Activated CD8-positive, alpha-beta T cell treated with anti-CD3 and anti-CD28 coated beads, Interleukin-2, amount 10 ng/mL, durations not matched to agents 7 days and 5 days (primary cell): ENCODE measurements at regions of chr1 and their contacts with region 1.

Region 1: DNA sequence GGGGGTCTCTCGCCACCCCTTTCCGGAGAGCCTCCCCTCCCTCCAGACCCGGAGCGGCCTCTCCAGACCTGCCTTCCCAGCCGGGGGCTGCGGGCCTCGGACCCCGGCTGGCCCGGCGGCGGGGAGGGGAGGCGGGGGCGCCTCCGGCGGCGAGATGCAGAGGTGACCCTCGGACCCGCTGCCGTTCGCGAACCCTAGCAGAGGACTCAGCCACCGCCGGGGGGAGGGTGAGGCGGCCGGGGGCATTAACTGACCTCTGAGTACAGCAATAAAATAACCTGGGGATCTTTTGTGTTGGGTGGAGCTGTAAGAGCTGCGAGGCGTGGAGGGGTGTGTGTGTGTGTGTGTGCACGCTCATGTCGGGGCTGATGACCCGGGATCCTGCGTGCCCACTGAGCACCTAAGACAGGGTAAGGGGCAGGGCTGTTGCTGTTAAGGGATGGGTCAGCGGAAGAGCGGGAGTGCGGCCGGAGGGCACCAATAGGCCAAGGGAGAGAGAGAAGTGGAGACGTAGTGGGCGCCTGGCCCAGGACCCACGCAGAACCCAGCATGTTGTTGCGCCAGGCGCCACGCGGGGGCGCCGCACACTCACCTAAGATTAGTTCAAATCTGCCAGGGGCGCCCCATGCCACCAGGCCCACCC is 6.3 kb downstream of the HAPLN2 start:
- DNase-seq: peak; percentile 70
- ATAC-seq: peak; percentile 57
- H3K4me3 Mint-ChIP-seq: peak overlapping the region; percentile 40
- H3K27ac Mint-ChIP-seq: no peak overlapping the region
- H3K4me1 Mint-ChIP-seq: peaks cover 12% of the 10 kb centered on the region
- H3K27me3 Mint-ChIP-seq: peaks cover 47% of the 10 kb centered on the region

Region 2: DNA sequence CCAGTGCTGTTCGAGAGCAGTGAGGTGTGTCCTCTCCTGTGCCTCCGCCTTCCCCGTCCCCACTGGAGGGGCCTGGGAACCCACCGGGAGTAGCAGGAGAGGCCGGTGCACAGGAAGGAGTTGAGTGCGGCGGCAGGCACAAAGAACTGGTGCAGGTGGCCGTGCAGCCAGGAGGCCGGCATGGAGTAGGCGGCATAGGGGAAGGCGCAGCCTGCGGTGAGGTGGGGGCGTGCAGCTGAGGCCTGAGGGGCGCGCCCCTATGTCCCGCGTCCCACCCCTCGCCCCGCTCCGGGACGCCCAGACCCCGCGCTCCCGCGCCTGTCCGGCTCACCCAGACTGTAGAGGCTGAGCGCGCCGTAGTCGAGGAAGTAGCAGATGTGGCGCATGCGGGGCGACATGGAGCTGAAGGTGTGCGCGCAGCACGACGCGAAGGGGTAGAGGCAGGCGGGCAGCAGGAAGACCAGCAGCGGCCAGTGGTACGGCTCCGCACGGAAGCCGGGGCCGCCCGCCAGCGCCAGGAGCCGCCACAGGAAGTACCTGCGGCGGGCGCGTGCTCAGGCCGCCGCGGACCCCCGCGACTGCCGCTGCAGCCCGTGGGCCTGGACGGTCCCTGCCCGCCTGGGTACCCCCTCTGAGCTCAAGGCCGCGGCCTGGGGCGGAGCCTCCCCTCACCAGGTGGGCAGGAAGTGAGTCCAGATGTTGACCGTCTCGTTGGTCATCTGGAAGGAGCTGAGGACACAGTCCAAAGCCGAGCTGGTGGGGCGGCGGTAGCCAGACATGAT is 379.9 kb before region 1 on chr1:
- CTCF ChIA-PET with region 1: no interaction called
- POLR2A ChIA-PET with region 1: no interaction called
- DNase-seq: peak; percentile 65
- ATAC-seq: peak; percentile 82
- H3K4me3 Mint-ChIP-seq: peak overlapping the region; percentile 75
- H3K27ac Mint-ChIP-seq: peak overlapping the region; percentile 93
- H3K4me1 Mint-ChIP-seq: peaks cover 37% of the 10 kb centered on the region
- H3K27me3 Mint-ChIP-seq: no peaks in the 10 kb centered on the region

Region 3: DNA sequence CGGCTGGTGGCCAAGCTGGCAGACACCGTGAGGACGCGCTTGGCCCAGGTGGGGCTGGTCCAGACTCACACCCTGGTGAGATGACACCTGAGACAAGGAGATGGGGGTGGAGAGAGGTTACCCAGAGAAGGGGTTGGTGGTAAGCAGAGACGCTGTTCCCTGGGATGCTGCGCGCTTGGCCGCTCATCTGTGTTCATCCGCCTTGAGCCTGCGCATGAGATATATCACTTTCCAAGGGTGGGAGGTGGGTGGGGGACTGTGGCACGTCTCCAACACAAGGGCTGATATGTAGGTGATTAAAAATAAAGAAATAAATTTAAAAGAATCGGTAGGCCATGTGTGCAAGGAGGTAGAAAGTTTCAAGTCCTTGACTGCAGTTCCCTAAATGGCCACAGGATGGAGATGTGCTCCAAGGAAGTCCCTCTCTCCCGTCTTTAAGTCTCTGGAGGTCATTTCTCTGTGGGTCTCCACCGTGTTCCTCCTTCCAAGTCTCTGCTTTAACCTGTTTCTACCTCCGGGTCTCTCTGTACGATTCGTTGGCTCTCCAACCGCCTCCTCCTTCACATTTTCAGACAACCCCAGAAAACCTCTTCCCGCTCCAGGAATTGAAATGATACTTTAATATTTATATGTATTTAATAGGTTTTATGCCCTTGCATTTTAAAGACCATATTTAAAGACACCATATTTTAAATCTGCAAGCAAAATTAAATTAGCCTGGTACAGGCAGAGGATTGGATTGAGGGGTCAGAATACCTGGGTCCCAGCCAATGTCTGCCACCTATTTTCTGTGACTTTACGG is 41.5 kb before region 1 on chr1:
- CTCF ChIA-PET with region 1: interaction called, 11 read pairs
- POLR2A ChIA-PET with region 1: interaction called, 3 read pairs
- DNase-seq: peak; percentile 88
- ATAC-seq: peak; percentile 17
- H3K4me3 Mint-ChIP-seq: peak overlapping the region; percentile 86
- H3K27ac Mint-ChIP-seq: peak overlapping the region; percentile 93
- H3K4me1 Mint-ChIP-seq: peaks cover 39% of the 10 kb centered on the region
- H3K27me3 Mint-ChIP-seq: no peaks in the 10 kb centered on the region

Region 4: DNA sequence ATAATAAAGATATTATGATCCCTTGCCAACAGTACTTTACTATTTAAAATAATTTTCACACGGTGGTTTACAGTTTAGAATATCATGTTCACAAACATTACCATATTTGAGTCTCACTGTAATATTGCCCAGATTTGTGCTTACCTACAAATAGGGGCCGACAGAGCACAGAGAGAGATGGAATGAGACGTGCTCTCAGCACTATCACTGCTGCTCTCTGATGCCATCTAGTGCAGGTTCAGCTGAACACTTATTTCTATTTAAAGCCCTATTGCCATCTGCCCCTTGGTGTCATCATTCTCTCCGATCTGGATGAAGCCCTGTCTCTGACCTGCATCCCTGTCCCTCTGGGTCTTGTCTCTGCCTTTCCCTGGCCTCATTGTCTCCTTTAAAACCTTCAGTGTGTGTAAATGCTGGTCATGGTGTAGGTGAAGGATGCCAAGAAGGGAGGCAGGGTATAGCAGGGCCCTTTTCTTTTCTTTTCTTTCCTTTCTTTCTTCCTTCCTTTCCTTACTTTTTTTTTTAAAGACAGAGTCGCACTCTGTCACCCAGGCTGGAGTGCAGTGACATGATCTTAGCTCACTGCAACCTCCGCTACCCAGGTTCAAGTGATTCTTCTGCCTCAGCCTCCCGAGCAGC is 17.4 kb before region 1 on chr1:
- CTCF ChIA-PET with region 1: interaction called, 19 read pairs
- POLR2A ChIA-PET with region 1: no interaction called
- DNase-seq: peak; percentile 83
- ATAC-seq: peak; percentile 96
- H3K4me3 Mint-ChIP-seq: no peak overlapping the region
- H3K27ac Mint-ChIP-seq: no peak overlapping the region
- H3K4me1 Mint-ChIP-seq: peaks cover 15% of the 10 kb centered on the region
- H3K27me3 Mint-ChIP-seq: peaks cover 16% of the 10 kb centered on the region

Region 5: DNA sequence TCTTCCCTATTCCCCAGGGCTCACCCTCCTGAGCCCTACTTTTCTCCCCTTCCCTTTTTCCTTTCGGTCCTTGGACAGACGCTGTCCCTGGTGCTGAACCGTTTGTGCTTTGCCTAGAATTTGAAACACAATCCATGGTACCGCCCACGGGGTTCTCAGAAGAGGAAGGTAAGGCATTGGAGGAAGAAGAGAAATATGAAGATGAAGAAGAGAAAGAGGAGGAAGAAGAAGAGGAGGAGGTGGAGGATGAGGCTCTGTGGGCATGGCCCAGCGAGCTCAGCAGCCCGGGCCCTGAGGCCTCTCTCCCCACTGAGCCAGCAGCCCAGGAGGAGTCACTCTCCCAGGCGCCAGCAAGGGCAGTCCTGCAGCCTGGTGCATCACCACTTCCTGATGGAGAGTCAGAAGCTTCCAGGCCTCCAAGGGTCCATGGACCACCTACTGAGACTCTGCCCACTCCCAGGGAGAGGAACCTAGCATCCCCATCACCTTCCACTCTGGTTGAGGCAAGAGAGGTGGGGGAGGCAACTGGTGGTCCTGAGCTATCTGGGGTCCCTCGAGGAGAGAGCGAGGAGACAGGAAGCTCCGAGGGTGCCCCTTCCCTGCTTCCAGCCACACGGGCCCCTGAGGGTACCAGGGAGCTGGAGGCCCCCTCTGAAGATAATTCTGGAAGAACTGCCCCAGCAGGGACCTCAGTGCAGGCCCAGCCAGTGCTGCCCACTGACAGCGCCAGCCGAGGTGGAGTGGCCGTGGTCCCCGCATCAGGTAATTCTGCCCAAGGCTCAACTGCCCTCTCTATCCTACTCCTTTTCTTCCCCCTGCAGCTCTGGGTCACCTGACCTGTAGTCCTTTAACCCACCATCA is 26.8 kb after region 1 on chr1:
- CTCF ChIA-PET with region 1: interaction called, 240 read pairs
- POLR2A ChIA-PET with region 1: no interaction called
- DNase-seq: peak; percentile 58
- ATAC-seq: no peak
- H3K4me3 Mint-ChIP-seq: no peak overlapping the region
- H3K27ac Mint-ChIP-seq: no peak overlapping the region
- H3K4me1 Mint-ChIP-seq: peaks cover 8% of the 10 kb centered on the region
- H3K27me3 Mint-ChIP-seq: peaks cover 80% of the 10 kb centered on the region

Region 6: DNA sequence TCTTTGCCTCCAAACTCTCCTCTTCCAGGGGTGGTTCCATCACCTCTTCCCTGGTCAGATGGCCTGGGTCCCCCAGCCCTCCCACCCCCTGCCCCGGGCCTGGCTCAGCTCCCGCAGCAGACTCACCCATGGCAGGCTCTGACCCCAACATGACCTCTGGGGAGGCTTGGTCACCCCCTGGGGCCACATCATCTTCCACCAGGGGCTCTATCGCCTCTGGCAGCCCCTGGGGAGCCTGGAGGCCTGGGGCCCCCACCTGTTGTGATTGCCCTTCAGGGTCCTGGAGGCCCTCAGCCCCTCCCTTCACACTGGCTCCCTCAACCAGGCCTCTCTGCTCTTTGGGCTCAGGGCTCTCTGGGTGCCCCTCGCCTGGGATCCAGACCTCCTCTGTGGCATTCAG is 45.2 kb after region 1 on chr1:
- CTCF ChIA-PET with region 1: interaction called, 35 read pairs
- POLR2A ChIA-PET with region 1: no interaction called
- DNase-seq: no peak
- ATAC-seq: no peak
- H3K4me3 Mint-ChIP-seq: no peak overlapping the region
- H3K27ac Mint-ChIP-seq: no peak overlapping the region
- H3K4me1 Mint-ChIP-seq: peaks cover 1% of the 10 kb centered on the region
- H3K27me3 Mint-ChIP-seq: peaks cover 41% of the 10 kb centered on the region

Region 7: DNA sequence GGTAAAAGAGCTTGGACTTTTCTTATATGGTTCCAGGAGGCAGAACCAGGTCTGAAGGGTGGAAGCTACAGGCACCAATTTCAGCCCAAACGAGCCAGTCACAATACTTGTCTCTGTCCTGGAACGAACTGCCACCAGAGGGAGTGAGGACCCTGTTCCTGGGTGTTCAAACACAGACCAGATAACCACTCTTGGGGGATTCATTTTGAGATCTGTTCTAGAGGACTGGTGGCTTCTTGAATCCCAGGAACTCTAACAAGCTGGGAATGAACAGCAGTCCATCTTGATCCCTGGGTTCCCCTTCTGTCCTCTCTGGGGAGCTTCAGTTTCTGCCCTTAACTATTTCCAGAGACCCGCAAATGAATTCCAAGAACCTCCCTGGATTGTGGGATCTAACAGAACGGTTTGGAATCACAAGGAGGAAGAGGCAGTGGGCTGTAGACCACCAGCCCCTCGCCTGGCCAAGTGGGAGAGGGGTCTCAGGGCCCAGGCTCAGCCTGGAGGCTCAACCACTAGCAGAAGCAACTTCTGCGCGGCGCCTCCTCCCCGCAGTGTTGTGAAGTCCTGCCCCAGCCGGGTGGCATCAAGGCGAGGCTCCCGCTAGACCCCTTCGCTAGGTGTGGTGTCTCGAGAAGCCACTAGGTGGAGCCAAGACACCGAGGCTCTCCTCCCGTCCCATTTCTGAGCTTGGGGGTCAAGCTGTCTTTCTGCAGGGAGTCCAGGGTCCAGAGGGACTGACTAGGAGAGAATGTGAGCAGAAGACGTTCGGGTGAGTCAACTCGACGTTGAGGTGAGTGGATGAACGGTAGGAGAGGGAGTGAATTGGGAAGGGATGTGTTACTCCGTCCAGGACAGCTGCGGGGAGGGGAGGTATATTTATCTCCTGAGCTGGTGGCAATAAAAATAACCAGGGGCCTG is 63.7 kb after region 1 on chr1:
- CTCF ChIA-PET with region 1: interaction called, 26 read pairs
- POLR2A ChIA-PET with region 1: interaction called, 3 read pairs
- DNase-seq: peak; percentile 83
- ATAC-seq: peak; percentile 97
- H3K4me3 Mint-ChIP-seq: no peak overlapping the region
- H3K27ac Mint-ChIP-seq: no peak overlapping the region
- H3K4me1 Mint-ChIP-seq: peaks cover 36% of the 10 kb centered on the region
- H3K27me3 Mint-ChIP-seq: peaks cover 55% of the 10 kb centered on the region

Region 8: GRCh38 chr1:156910309-156910782 is 284.8 kb after region 1 on chr1:
- CTCF ChIA-PET with region 1: no interaction called
- POLR2A ChIA-PET with region 1: no interaction called
- DNase-seq: peak; percentile 69
- ATAC-seq: no peak
- H3K4me3 Mint-ChIP-seq: no peak overlapping the region
- H3K27ac Mint-ChIP-seq: no peak overlapping the region
- H3K4me1 Mint-ChIP-seq: peaks cover 5% of the 10 kb centered on the region
- H3K27me3 Mint-ChIP-seq: peaks cover 3% of the 10 kb centered on the region